Ascending aorta (tissue), 2 donors: ENCODE measurements at regions of chr1 and their contacts with region 1.

Region 1: DNA sequence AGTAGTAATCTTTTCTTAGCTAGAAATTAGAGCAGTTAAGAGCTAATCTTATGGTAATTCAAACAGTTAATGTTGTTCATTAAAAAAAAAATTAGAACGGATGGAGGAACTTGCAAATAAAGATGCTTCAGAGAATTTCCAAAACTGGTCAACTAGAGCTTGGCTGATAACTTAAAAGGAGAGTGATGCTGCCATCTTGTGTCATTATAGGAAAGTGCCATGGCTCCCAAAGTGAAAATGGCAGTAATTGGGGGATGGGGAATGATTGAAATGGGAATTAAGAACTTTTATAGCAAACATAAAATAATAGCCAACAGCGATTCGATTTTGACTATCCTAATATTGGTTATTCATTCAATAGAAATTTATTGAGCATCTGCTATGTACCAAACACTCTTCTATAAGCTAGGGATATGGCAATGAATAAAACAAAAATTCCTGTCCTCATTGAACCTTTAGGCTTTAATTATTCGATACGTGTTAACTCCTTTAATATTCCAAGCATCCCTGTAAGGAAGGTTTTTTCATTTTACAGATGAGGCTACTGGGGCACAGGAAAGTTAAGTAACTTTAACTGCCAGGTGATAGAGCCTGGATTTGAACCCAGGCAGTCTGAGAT is 5.7 kb upstream of the PLPP3 start:
- DNase-seq: no peak
- H3K4me3 ChIP-seq: no peak overlapping the region
- H3K27ac ChIP-seq: no peak overlapping the region
- H3K4me1 ChIP-seq: peaks cover 0 to 3% of the 10 kb centered on the region in 2 donors
- H3K27me3 ChIP-seq: no peaks in the 10 kb centered on the region
- CTCF ChIP-seq: peak; percentile 80 to 84 (median 83)

Region 2: GRCh38 chr1:55140546-55140983 is 1444.5 kb before region 1 on chr1:
- intact Hi-C with region 1: loop called (anchors 5 kb)
- DNase-seq: peak in 1 of 2 donors; percentile 85
- H3K4me3 ChIP-seq: no peak overlapping the region
- H3K27ac ChIP-seq: peak overlapping the region in 1 of 2 donors; percentile 9
- H3K4me1 ChIP-seq: no peaks in the 10 kb centered on the region
- H3K27me3 ChIP-seq: no peaks in the 10 kb centered on the region
- CTCF ChIP-seq: peak; percentile 65 to 86 (median 76)

Region 3: DNA sequence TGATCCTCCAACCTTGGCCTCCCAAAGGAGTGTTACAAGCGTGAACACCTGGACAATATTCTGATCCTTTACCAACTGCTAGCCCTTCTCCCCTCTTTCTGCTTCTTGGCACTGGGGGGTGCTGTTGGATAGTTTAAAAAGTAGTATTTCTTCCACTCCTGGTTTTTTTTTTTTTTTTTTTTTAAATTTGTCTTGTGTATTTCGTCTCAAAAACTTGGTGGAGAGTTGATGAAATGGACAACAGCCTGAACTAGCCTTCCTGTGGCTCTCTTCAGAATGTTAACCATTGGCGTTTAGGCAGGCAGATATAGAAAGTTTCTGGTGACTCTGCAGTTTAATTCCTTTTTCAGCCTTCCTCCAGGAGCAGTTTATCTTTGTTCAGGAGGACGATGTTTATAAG is 1300.2 kb before region 1 on chr1:
- intact Hi-C with region 1: loop called (anchors 1 kb)
- DNase-seq: no peak
- H3K4me3 ChIP-seq: no peak overlapping the region
- H3K27ac ChIP-seq: no peak overlapping the region
- H3K4me1 ChIP-seq: no peaks in the 10 kb centered on the region
- H3K27me3 ChIP-seq: no peaks in the 10 kb centered on the region
- CTCF ChIP-seq: peak; percentile 40 to 72 (median 51)

Region 4: DNA sequence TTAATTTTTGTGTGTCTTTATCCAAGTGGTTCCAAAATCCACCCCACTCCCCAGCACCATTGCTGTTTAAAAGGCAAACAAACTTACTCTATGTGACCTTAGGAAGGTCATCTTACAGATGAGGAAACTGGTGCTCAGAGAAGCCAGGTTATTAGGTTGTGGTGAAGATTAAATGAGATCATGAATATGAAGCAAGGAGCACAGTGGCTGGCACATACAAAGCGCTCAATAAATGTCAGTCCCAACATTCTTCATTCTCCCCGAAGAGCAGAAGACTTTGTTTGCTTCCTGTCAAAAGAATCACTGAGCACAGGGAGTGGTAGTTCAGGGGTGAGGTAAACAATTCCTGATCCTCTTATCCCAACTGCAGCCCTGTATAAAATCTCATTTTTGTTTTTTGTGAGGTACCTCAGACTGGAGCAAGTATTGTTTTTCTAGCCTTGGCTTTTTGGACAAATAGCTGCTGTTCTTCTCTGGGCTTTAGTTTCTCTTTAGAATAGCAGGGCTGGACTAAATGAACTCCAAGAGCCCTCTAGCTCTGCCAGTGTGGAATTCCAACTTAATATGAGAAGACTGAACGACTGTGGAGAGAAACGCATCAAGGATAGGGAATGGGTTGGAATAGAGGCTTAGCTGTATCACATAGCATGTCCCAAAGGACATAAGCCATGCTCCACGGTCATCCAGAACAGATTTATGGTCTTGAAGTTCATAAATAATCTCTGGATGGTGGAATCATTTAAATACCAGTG is 914.5 kb before region 1 on chr1:
- intact Hi-C with region 1: loop called (anchors 5 kb)
- DNase-seq: no peak
- H3K4me3 ChIP-seq: peak overlapping the region in 1 of 2 donors; percentile 31
- H3K27ac ChIP-seq: peak overlapping the region; percentile 57 to 85
- H3K4me1 ChIP-seq: peaks cover 0 to 18% of the 10 kb centered on the region in 2 donors
- H3K27me3 ChIP-seq: no peaks in the 10 kb centered on the region
- CTCF ChIP-seq: peak in 2 of 3 experiments; percentile 17 to 35

Region 5: DNA sequence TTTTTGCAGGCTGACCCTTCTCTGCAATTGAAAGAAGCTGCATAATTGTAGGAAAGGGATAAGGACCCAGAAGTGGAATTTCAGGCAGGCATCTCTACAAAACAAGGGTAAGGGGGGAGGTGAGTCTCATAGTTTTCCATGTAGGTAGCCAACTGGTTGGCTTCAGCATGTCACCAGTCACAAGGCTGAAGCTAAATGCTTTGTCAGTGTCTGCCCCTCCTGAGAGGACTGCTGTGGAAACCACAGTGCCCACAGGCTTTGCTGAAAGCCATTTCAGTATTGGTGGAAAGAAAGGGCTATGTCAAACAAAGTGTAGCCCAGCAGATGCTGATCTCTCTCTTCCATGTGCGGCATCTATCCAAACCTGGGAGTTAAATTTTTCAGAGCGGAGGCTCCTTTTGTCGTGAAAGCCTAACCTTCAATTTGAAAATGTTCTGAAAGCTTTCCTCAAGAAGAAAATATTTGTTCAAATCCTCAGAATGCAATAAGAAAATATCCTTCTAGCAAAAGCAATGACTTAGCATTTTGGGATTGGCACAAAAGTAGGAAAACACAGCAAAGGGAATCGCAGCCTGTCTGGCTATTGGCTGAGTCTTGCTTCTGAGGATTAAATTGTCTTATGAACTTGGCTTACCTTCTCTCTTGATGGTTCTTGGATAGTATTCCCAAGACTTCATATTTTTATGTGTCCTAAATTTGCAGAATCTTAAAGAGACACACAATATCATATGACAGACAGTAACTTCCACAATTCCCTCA is 597.3 kb before region 1 on chr1:
- intact Hi-C with region 1: loop called (anchors 5 kb)
- DNase-seq: no peak
- H3K4me3 ChIP-seq: peak overlapping the region in 1 of 2 donors; percentile 25
- H3K27ac ChIP-seq: peak overlapping the region; percentile 32 to 46
- H3K4me1 ChIP-seq: peaks cover 0 to 6% of the 10 kb centered on the region in 2 donors
- H3K27me3 ChIP-seq: no peaks in the 10 kb centered on the region
- CTCF ChIP-seq: no peak

Region 6: GRCh38 chr1:56265216-56265615 is 319.8 kb before region 1 on chr1:
- intact Hi-C with region 1: no loop called
- DNase-seq: no peak
- H3K4me3 ChIP-seq: no peak overlapping the region
- H3K27ac ChIP-seq: no peak overlapping the region
- H3K4me1 ChIP-seq: no peaks in the 10 kb centered on the region
- H3K27me3 ChIP-seq: no peaks in the 10 kb centered on the region
- CTCF ChIP-seq: no peak

Region 7: DNA sequence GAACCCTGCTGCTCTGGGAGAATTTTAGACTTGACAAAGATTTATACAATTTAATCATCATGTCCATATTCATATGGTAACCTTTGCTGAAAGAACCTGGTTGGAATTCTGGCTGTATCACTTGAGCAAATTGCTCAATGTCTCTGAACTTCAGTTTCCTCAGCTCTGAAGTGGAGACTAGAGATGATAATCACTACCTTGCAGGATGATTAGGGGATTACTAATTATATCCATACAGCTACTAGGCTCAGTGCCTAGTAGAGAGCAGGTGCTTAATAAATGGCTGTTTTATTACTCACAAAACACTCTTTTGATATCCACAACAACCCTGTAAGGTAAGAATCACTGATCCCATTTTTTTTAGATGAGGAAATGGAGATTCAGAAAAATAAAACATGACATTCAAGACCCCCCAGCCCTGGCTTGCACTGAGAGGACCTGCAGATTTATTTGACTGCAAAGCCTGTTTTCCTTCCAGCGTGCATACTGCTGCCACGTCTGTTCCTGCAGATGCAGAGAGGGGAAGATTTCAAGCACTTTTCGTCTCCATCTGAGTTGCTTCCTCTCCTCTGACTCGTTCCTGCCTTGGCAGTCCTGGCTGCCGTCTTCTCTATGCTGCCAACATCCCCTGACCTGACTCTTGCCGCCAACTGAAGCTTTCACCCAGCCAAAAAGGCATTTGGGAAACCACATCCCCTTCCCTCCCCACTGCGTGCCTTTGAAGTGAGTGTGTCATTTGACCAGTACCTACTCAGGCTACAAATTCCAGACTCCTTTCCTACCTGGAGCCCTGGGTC is 208.6 kb before region 1 on chr1:
- intact Hi-C with region 1: loop called (anchors 5 kb)
- DNase-seq: peak; percentile 40 to 89
- H3K4me3 ChIP-seq: no peak overlapping the region
- H3K27ac ChIP-seq: peak overlapping the region; percentile 64 to 71
- H3K4me1 ChIP-seq: peaks cover 7 to 30% of the 10 kb centered on the region in 2 donors
- H3K27me3 ChIP-seq: no peaks in the 10 kb centered on the region
- CTCF ChIP-seq: no peak

Region 8: DNA sequence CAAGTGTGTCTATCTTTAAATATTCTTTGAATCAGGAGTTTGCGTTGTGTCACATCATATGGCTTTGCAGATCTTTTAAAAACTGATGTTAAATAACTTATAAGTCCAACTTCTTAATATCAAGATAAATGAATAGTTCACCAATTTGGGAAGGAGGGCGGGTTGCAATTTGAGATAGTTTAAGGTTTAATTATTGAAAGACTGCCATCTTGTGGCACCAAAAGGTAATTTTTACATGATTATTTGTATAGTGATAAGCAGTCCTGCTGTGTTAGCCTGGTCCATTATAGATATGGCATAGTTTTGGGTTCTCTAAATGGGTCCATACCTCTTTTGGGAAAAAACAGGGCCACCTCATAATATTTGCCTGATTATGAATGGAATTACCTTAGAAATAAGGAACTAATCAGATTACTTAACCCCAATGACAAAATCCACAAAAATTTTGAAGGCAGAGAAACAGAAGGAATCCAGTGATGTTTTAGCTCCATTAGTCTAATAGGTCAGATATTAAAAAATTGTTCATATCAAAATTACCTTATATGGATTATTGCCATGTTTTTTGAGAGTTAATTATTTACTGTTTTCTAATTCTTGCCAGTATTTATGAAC is 124.4 kb after region 1 on chr1:
- intact Hi-C with region 1: loop called (anchors 5 kb)
- DNase-seq: no peak
- H3K4me3 ChIP-seq: no peak overlapping the region
- H3K27ac ChIP-seq: no peak overlapping the region
- H3K4me1 ChIP-seq: no peaks in the 10 kb centered on the region
- H3K27me3 ChIP-seq: no peaks in the 10 kb centered on the region
- CTCF ChIP-seq: peak; percentile 26 to 56 (median 45)